Caco-2 (cell line): ENCODE measurements at regions of chrX and their contacts with region 1.

Region 1: DNA sequence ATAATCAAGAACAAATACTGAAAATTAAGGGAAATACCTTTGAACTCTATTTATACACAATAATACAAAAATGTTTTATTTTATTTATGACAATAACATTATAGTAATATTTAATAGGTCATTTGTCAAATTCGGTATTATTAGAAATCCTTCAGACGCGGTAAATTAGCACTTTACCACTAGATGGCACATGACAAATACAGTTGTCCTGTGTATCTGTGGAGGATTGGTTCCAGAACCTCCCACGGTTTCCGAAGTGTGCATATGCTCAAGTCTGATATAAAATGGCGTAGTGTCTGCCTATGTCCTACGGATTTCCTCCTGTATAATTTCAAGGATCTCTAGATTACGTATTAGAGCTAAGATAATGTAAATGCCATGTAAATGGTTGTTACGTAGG is 8.1 kb upstream of the LINC00632 start:
- DNase-seq: peak in 1 of 2 experiments; percentile 1
- H3K4me3 ChIP-seq: no peak overlapping the region
- H3K4me3 Mint-ChIP-seq: no peak overlapping the region
- H3K27ac Mint-ChIP-seq: no peak overlapping the region
- H3K4me1 ChIP-seq: no peaks in the 10 kb centered on the region
- H3K4me1 Mint-ChIP-seq: no peaks in the 10 kb centered on the region
- H3K27me3 ChIP-seq: no peaks in the 10 kb centered on the region
- H3K27me3 Mint-ChIP-seq: no peaks in the 10 kb centered on the region
- CTCF ChIP-seq: peak in 1 of 2 experiments; percentile 34

Region 2: DNA sequence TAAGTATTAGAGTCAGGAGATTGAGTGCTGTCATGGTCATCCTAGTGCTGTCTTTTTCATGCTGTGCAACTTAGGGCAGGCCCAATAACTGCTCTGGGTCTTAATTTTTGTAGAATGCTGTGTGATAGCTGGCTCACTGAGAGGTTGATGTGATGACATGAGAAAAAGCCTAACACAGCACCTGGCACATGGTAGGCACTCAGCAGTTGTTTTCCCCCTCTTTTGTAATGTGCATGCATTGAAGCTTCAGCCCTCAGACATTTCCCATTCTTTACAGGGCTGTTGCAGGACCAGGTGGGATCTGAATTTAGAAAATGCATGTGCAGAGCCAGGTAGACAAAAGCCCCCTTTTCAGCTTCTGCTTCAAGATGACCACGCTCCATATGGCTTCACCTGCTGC is 152.5 kb before region 1 on chrX:
- CTCF ChIA-PET with region 1: no interaction called
- POLR2A ChIA-PET with region 1: no interaction called
- intact Hi-C with region 1: no loop called
- DNase-seq: no peak
- H3K4me3 ChIP-seq: no peak overlapping the region
- H3K4me3 Mint-ChIP-seq: no peak overlapping the region
- H3K27ac Mint-ChIP-seq: no peak overlapping the region
- H3K4me1 ChIP-seq: no peaks in the 10 kb centered on the region
- H3K4me1 Mint-ChIP-seq: no peaks in the 10 kb centered on the region
- H3K27me3 ChIP-seq: no peaks in the 10 kb centered on the region
- H3K27me3 Mint-ChIP-seq: peaks cover 3% of the 10 kb centered on the region
- CTCF ChIP-seq: no peak

Region 3: DNA sequence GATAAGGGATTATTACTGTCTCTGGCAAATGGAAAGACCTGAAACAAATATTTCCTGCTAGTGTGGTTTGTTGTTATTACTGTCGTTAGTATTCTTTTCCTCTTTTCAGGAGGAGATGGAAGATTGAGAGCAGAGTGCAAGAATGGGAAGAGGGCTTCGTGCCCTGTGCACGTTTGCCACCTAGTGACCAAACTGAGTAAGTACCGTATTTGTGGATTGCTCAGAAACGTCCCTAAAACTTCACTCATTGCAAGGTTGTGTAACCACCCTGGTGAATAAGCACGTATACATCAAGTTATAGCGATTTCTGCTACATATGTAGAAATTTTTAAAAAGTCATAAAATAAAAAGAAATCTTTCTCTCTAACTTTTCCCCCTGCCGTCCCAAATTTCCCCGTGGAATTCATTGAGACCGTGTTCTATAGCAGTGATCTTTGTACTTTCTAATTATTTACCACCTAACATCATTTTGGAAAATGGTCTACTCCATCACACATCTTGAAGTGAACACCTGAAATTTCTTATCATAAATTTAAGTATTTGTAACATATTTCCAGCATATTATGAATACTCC is 32.4 kb after region 1 on chrX:
- CTCF ChIA-PET with region 1: no interaction called
- POLR2A ChIA-PET with region 1: no interaction called
- intact Hi-C with region 1: loop called (anchors 1 kb)
- DNase-seq: peak in 1 of 2 experiments; percentile 17
- H3K4me3 ChIP-seq: no peak overlapping the region
- H3K4me3 Mint-ChIP-seq: no peak overlapping the region
- H3K27ac Mint-ChIP-seq: no peak overlapping the region
- H3K4me1 ChIP-seq: no peaks in the 10 kb centered on the region
- H3K4me1 Mint-ChIP-seq: no peaks in the 10 kb centered on the region
- H3K27me3 ChIP-seq: no peaks in the 10 kb centered on the region
- H3K27me3 Mint-ChIP-seq: peaks cover 3% of the 10 kb centered on the region
- CTCF ChIP-seq: peak; percentile 33 to 65